ENCODE measurements at regions of chr1 and their contacts with region 1.

Region 1: GRCh38 chr1:171226747-171227370 is 21.4 kb upstream of the FMO1 start:
- DNase-seq: peak in 1 of 2 donors; percentile 49
- ATAC-seq: peak; percentile 85
- H3K4me3 ChIP-seq: no peak overlapping the region
- H3K27ac ChIP-seq: no peak overlapping the region
- H3K4me1 ChIP-seq: peaks cover 0 to 2% of the 10 kb centered on the region in 2 donors
- H3K27me3 ChIP-seq: no peaks in the 10 kb centered on the region

Region 2: DNA sequence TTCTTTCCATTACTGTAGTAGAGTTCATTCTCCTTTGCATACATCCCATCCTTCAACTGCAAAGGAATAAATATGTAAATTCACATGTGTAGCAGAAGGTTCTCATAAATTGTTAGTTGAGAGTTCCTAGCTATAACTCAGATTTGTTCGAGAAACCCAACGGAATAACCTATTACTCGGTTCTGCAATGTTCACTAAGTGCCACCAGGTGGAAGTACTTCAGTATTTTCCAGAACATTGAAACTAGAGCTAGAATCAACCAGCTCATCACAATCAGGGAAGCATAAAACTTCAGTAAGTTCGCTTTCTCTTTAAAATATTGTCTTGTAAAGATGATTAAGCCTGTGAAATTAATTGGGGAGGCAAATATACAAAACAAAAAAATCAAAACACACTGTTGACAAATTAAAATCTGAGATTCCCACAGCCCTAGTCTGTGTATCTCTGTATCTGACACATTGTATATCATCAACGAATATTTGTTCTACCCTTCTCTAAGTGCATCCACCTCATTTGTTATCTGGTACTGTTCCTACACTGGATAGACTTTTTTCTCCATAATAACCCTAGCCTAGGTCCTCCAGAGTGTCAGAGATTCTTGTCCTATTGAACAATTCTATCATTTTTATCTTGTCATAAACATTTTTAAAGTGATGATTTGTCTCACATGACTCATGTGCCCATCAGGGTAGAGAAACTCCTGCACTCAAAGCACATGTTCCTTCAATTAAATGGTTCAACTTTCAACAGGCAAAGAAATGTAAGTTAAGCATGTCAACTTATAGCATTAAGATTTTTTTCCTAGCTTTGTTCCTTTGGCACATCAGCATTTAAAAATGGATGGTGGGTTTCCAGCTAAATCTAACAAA is 259.6 kb before region 1 on chr1:
- intact Hi-C with region 1: loop called (anchors 1 to 5 kb)
- DNase-seq: no peak
- ATAC-seq: peak; percentile 85
- H3K4me3 ChIP-seq: no peak overlapping the region
- H3K27ac ChIP-seq: no peak overlapping the region
- H3K4me1 ChIP-seq: peaks cover 0 to 2% of the 10 kb centered on the region in 2 donors
- H3K27me3 ChIP-seq: no peaks in the 10 kb centered on the region

Region 3: DNA sequence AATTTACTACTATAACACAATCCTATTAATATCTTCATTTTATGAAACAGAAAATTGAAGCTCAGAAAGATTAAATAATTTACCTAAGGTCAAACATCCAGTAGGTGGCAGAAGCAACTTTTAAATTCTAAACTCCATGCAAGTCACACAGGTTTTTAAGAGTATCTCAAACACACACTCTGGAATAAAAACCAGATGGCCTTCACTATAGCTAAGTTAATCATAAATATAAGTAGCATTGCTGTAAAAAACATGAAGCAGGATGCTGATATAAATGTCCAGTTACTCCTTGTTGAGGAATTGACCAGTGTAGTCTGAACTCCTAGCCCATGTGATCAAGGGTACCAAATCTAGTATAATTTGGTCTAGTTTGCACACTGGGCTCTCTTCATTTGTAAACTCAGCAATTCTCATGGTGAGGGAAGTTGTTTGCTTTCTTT is 145.5 kb before region 1 on chr1:
- intact Hi-C with region 1: loop called (anchors 2 kb)
- DNase-seq: no peak
- ATAC-seq: peak; percentile 81
- H3K4me3 ChIP-seq: peak overlapping the region in 1 of 2 donors; percentile 40
- H3K27ac ChIP-seq: peak overlapping the region; percentile 74 to 90
- H3K4me1 ChIP-seq: peaks cover 0 to 2% of the 10 kb centered on the region in 2 donors
- H3K27me3 ChIP-seq: no peaks in the 10 kb centered on the region